Caco-2 (cell line): ENCODE measurements at regions of chr11 and their contacts with region 1.

Region 1: DNA sequence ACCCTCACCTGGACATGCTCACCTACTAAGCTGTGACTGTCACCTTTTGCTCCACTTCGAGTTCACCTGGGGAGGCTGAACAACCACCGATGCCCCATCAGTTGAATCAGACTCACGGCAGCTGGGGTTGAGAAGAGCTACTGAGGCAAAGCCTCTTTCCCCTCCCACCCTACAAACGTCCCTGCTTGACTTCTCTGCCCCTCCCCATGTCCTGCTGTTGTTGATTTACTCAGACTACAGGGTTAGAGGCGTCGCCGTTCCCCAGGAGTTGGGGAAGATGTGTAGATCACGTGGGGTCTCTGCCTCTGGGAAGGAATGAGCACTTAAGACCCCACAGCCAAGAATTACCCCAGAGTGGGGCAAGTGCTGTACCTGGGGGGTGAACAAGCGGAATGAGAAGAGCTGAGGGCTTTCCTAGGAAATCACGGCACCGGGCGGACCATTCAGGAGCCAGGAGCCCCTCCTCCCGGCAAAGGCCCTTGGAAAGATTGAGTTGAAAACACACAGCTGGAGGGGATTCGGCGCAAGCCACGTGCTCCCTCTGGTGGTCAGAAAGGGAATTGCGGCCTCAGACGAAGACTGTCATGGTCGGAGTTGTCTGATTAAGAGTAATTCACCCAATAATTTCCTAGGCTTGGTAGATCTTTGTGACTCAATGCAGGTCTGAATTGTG is 7.0 kb downstream of the FXYD2 start:
- DNase-seq: peak; percentile 86 to 93
- H3K4me3 ChIP-seq: no peak overlapping the region
- H3K4me3 Mint-ChIP-seq: peak overlapping the region; percentile 37
- H3K27ac Mint-ChIP-seq: no peak overlapping the region
- H3K4me1 ChIP-seq: peaks cover 52% of the 10 kb centered on the region
- H3K4me1 Mint-ChIP-seq: peaks cover 23% of the 10 kb centered on the region
- H3K27me3 ChIP-seq: no peaks in the 10 kb centered on the region
- H3K27me3 Mint-ChIP-seq: no peaks in the 10 kb centered on the region
- CTCF ChIP-seq: peak; percentile 100

Region 2: DNA sequence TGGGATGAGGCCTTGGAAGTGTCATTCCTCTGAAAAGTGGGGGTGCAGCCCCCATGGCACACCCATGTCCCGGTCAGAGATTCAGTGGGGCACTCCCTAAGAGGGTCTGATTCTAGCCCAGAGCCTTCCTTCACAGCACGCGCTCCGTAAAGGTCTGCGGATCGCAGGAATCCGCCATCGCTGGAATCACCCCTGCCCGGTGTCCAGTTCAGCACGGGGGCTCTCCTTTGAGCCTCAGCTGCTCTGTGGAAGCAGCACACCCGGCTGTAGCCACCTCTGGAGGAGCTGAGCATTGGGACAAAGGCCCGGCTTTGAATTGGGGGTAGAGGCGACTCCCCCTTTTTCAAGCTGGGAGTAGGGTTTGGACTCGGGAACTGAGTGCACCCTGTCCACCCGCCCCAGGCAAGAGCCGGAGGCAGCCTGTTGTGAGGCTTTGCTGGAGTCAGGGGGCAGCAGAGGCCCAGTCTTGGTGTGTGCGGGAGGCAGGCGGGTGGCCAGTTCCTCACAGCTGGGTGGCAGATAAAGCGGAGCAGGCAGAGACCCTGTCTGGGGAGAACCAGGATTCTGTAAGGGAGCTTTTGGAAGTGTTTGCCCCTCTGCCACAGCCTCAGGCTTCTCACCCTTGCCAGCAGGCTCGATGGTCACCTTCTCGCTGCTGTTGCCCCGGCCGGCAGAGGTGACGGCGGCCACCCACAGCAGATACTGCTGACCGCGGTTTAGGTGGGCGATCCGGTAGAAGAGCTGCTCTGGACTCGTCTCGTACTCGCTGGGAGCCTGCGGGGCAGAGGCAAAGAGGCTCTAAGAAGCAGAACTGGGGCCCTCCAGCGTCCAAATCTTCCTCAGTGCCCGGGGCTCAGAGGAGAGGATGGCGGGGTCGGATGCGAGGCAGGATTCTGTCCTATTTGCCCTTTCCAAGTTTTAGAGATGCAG is 374.0 kb before region 1 on chr11:
- CTCF ChIA-PET with region 1: interaction called, 25 read pairs
- POLR2A ChIA-PET with region 1: no interaction called
- intact Hi-C with region 1: loop called (anchors 1 kb)
- DNase-seq: peak; percentile 78 to 84
- H3K4me3 ChIP-seq: no peak overlapping the region
- H3K4me3 Mint-ChIP-seq: no peak overlapping the region
- H3K27ac Mint-ChIP-seq: no peak overlapping the region
- H3K4me1 ChIP-seq: no peaks in the 10 kb centered on the region
- H3K4me1 Mint-ChIP-seq: no peaks in the 10 kb centered on the region
- H3K27me3 ChIP-seq: no peaks in the 10 kb centered on the region; the same call in 1 of the 2 replicates
- H3K27me3 Mint-ChIP-seq: peaks cover 41% of the 10 kb centered on the region
- CTCF ChIP-seq: peak; percentile 86 to 98

Region 3: GRCh38 chr11:117833401-117833891 is 15.9 kb after region 1 on chr11:
- CTCF ChIA-PET with region 1: interaction called, 11 read pairs
- POLR2A ChIA-PET with region 1: no interaction called
- intact Hi-C with region 1: no loop called
- DNase-seq: peak; percentile 84 to 91
- H3K4me3 ChIP-seq: no peak overlapping the region
- H3K4me3 Mint-ChIP-seq: peak overlapping the region; percentile 12
- H3K27ac Mint-ChIP-seq: no peak overlapping the region
- H3K4me1 ChIP-seq: peaks cover 17% of the 10 kb centered on the region
- H3K4me1 Mint-ChIP-seq: peaks cover 38% of the 10 kb centered on the region
- H3K27me3 ChIP-seq: no peaks in the 10 kb centered on the region
- H3K27me3 Mint-ChIP-seq: peaks cover 4% of the 10 kb centered on the region
- CTCF ChIP-seq: no peak

Region 4: DNA sequence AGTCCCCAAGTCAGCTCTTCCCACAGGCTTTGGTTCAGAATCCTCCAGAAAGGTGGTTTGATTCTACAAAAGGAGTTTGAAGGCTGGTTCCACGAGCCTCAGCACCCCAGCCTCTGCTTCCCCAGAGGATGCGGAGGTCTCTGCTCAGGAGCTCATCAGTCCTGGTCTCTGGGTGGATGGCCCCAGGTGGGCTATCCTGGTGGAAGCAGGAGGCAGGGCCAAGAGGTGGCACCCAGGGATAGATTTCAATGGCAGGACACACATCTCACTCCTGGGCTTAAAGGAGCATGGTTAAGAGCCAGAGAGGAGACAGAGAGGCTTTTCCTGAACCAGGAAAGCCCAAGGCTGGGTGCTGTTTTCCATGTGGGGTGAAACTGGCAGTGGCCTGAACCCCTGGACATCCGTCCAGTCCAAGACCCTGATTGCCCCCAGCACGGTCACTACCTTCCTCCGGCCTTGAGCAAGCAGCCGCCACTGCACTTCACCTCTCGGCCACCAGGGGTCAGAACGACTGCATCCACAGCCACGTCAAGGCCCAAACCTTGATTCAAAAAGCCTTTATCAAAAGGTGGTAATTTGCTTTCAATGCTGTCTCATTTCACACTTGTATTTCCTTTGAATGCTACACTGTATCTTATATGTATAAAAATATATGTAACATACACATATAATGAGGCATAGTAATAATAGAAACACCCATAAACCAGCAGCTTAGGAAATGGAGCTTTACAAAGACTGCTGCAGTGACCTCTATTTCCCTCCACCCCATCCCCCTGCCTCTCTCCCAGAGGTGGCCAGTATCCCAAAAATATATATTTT is 26.4 kb after region 1 on chr11:
- CTCF ChIA-PET with region 1: interaction called, 5 read pairs
- POLR2A ChIA-PET with region 1: no interaction called
- intact Hi-C with region 1: loop called (anchors 1 kb)
- DNase-seq: peak; percentile 81 to 89
- H3K4me3 ChIP-seq: no peak overlapping the region
- H3K4me3 Mint-ChIP-seq: no peak overlapping the region
- H3K27ac Mint-ChIP-seq: no peak overlapping the region
- H3K4me1 ChIP-seq: no peaks in the 10 kb centered on the region
- H3K4me1 Mint-ChIP-seq: no peaks in the 10 kb centered on the region
- H3K27me3 ChIP-seq: no peaks in the 10 kb centered on the region
- H3K27me3 Mint-ChIP-seq: peaks cover 2% of the 10 kb centered on the region
- CTCF ChIP-seq: peak; percentile 99 to 100

Region 5: DNA sequence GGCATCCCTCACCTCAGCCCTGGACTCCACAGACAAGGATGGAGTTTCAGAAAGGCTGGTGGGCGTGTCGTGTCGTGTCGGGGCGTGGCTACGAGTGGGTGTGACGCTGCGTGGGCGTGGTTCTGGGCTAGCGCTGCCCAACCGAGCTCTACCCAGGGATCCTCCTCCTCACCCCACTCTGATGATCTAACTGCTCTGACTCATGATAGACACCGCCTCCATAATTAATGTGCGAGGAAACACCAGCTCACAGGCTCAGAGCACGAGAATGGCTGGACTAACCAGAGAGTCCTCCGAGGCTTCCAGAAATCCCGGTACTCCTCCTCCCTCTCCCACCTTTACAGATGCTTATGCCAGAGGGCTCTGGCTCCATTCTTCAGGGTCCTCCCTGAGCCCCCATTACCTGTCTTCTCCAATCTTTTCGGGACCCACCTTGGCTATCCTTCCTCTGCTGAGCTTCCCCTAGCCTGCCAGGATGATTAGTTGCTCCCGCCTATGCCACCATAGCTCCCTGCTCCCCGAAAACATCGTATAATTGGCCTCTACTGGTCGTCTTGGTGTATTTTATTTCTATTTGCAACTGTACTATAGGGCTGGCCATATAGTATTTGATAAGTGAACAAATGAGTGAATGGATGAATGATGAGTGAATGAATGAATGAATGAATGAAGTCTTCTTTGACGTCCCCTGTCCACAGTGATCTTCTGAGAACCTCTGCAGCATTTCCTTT is 89.9 kb after region 1 on chr11:
- CTCF ChIA-PET with region 1: interaction called, 8 read pairs
- POLR2A ChIA-PET with region 1: interaction called, 3 read pairs
- intact Hi-C with region 1: loop called (anchors 1 kb)
- DNase-seq: peak; percentile 95 to 96
- H3K4me3 ChIP-seq: peak overlapping the region; percentile 31
- H3K4me3 Mint-ChIP-seq: peak overlapping the region; percentile 66
- H3K27ac Mint-ChIP-seq: peak overlapping the region; percentile 73
- H3K4me1 ChIP-seq: peaks cover 8% of the 10 kb centered on the region
- H3K4me1 Mint-ChIP-seq: peaks cover 14% of the 10 kb centered on the region
- H3K27me3 ChIP-seq: no peaks in the 10 kb centered on the region
- H3K27me3 Mint-ChIP-seq: no peaks in the 10 kb centered on the region
- CTCF ChIP-seq: no peak

Region 6: DNA sequence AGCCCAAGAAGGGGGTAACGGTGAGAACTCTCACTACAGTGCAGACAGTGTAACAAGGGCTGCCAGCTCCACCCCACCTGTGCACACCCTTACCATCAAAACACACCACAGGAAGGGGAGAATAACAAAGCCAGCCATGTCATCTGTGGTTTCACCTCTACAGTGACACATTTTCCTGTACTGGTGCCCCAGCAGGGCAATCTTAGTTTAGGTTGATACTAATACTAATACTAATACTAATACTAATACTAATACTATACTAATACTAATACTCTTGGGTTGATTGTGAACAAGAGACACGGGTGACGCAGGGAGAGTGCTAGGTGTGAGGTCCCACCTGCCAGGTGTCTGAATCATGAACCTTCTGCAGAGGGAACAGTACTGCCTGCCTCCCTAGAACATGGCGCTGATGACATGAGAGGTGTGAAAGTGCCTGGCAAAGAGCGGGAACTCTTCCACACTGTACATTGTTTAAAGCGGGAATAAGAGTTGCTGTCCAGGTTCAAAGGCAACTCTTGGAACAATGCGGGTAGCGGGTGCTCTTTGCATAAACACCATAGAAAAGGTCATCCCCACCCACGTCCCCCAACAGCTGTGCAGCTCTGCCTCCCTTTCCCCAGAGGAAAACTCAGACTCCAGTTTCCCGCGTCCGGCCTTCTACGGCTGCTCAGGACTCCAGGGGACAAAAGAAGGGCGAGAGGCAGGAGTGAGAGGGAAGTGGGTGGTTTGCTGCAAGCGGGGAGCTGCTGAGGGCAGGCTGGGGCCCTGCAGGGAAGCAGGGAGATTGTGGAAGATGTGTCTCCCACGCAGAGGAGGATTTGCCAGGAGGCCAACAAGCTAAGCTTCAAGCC is 234.3 kb after region 1 on chr11:
- CTCF ChIA-PET with region 1: interaction called, 30 read pairs
- POLR2A ChIA-PET with region 1: no interaction called
- intact Hi-C with region 1: loop called (anchors 1 kb)
- DNase-seq: peak in 1 of 2 experiments; percentile 31
- H3K4me3 ChIP-seq: no peak overlapping the region
- H3K4me3 Mint-ChIP-seq: no peak overlapping the region
- H3K27ac Mint-ChIP-seq: no peak overlapping the region
- H3K4me1 ChIP-seq: no peaks in the 10 kb centered on the region
- H3K4me1 Mint-ChIP-seq: no peaks in the 10 kb centered on the region
- H3K27me3 ChIP-seq: no peaks in the 10 kb centered on the region
- H3K27me3 Mint-ChIP-seq: no peaks in the 10 kb centered on the region
- CTCF ChIP-seq: no peak